ENCODE measurements at regions of chr2 and their contacts with region 1.

Region 1: GRCh38 chr2:48420512-48421197 is 109.3 kb upstream of the STON1 start:
- DNase-seq: peak; percentile 87 to 93 (median 93)
- H3K4me3 ChIP-seq: peak overlapping the region in 4 of 7 experiments; percentile 19 to 66 (median 49)
- H3K27ac ChIP-seq: peak overlapping the region in 1 of 2 experiments; percentile 20
- H3K4me1 ChIP-seq: peaks cover 5 to 31% (median 15%) of the 10 kb centered on the region in 4 experiments
- H3K27me3 ChIP-seq: no peaks in the 10 kb centered on the region

Region 2: DNA sequence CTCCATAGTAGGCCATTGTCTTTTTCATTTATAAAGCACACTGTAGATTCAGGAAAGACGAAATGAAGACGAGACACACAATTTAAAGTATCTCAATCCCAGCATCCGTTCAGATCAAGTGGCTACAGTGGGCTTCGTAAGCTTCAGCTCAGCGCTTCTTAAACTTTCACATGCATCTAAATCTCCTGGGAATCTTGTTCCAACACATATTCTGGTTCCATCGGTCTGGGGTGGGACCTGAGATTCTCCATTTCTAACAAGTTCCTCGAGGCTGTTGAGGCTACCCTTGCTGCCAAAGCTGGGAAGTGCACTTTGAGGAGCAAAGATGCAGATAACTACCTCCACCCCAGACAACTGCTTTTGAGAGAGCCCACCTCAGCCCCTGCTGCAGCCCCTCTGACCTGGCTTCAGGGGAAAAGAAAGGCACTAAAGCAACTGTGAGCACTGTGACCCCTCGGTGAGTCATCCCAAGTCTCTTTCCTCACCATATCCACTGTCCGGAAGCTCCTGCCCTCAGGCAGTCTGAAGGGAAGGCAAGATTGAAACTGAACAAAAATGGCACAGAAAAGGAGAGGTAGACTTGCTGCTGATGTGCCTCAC is 313.2 kb before region 1 on chr2:
- CTCF ChIA-PET with region 1: interaction called, 18 read pairs
- POLR2A ChIA-PET with region 1: no interaction called
- DNase-seq: no peak
- H3K4me3 ChIP-seq: no peak overlapping the region
- H3K27ac ChIP-seq: no peak overlapping the region
- H3K4me1 ChIP-seq: peaks cover 0 to 30% (median 18%) of the 10 kb centered on the region in 4 experiments
- H3K27me3 ChIP-seq: no peaks in the 10 kb centered on the region

Measured in common myeloid progenitor, CD34-positive (primary cell).